B cell (primary cell): ENCODE measurements at regions of chr5 and their contacts with region 1.

Region 1: DNA sequence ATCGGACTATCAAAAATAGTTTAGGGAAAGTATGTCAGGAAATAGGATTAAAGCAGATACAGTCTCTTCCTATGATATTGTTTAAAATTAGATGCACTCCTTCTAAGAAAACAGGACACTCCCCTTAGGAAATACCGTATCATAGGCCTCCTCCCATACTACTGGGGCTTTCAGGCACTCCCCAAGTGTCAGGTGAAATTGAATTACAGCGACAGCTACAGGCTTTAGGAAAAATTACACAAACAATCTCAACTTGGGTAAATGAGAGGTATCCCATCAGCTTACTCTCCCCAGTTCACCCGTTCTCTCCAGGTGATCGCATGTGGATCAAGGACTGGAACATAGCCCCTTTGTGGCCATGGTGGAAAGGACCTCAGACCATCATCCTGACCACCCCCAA is 110.4 kb upstream of the EPB41L4A start:
- DNase-seq: peak; percentile 56
- ATAC-seq: no peak
- H3K4me3 ChIP-seq: no peak overlapping the region
- H3K4me3 Mint-ChIP-seq: no peak overlapping the region
- H3K27ac ChIP-seq: peak overlapping the region in 1 of 2 donors; percentile 61
- H3K27ac Mint-ChIP-seq: peak overlapping the region; percentile 85
- H3K4me1 ChIP-seq: peaks cover 81 to 83% of the 10 kb centered on the region in 2 donors
- H3K4me1 Mint-ChIP-seq: peaks cover 93% of the 10 kb centered on the region
- H3K27me3 ChIP-seq: no peaks in the 10 kb centered on the region
- H3K27me3 Mint-ChIP-seq: no peaks in the 10 kb centered on the region
- CTCF ChIP-seq: peak; percentile 66

Region 2: DNA sequence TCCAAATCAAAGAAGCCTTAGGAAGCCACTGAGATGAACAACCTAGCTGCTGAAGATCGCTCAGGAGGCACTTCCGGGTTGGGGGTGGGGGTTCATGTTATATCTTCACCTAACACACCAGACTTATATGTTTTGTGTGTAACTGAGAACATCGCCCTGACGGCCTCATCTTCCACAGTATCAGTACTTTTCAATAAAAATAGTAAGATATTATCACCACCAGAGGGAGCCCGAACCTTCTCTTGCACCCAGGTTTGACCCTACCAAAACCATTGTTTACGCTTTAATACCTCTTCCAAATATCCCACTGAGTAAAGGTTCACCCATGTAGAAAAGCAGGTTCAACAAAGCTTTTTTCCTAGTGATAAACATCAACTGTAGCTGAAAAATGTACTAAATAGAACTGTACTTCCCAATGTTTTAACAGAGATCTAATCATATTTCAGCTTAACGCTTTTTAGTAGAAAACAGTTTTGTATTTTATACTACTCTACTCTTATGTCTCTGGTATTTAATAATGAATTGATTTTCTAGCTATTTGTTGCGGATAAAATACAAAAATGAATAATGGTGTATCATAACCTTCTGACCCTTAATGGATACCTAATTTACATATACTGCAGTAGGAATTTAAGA is 354.4 kb before region 1 on chr5:
- CTCF ChIA-PET with region 1: interaction called, 32 read pairs
- POLR2A ChIA-PET with region 1: no interaction called
- intact Hi-C with region 1: loop called (anchors 1 kb)
- DNase-seq: peak; percentile 70
- ATAC-seq: peak; percentile 64
- H3K4me3 ChIP-seq: no peak overlapping the region
- H3K4me3 Mint-ChIP-seq: no peak overlapping the region
- H3K27ac ChIP-seq: no peak overlapping the region
- H3K27ac Mint-ChIP-seq: no peak overlapping the region
- H3K4me1 ChIP-seq: peaks cover 3% of the 10 kb centered on the region in 2 donors
- H3K4me1 Mint-ChIP-seq: peaks cover 4% of the 10 kb centered on the region
- H3K27me3 ChIP-seq: no peaks in the 10 kb centered on the region
- H3K27me3 Mint-ChIP-seq: no peaks in the 10 kb centered on the region
- CTCF ChIP-seq: peak; percentile 86

Region 3: GRCh38 chr5:112210430-112211005 is 319.0 kb before region 1 on chr5:
- CTCF ChIA-PET with region 1: interaction called, 9 read pairs
- POLR2A ChIA-PET with region 1: no interaction called
- intact Hi-C with region 1: loop called (anchors 1 kb)
- DNase-seq: peak; percentile 33
- ATAC-seq: no peak
- H3K4me3 ChIP-seq: no peak overlapping the region
- H3K4me3 Mint-ChIP-seq: no peak overlapping the region
- H3K27ac ChIP-seq: no peak overlapping the region
- H3K27ac Mint-ChIP-seq: no peak overlapping the region
- H3K4me1 ChIP-seq: no peaks in the 10 kb centered on the region
- H3K4me1 Mint-ChIP-seq: no peaks in the 10 kb centered on the region
- H3K27me3 ChIP-seq: no peaks in the 10 kb centered on the region
- H3K27me3 Mint-ChIP-seq: peaks cover 26% of the 10 kb centered on the region
- CTCF ChIP-seq: no peak

Region 4: DNA sequence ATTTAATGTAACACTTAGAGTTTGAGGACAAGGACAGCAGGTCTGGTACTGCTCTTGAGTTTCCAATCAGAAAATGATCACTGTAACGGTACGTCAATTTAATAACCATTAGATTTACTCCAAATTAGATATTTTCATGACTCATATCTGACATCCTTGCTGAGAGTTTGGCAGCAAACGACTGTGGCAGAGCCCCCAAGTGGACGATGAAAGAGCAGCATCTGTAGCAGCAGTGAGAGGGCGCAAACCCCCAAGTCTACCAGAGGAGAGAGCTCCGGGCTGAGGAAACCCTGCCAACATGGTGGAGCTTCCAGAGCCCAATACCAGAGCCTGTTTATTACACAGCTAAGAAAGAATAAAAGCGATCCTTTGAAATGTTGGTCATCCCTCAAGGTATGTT is 37.2 kb before region 1 on chr5:
- CTCF ChIA-PET with region 1: interaction called, 58 read pairs
- POLR2A ChIA-PET with region 1: no interaction called
- intact Hi-C with region 1: loop called (anchors 5 kb)
- DNase-seq: peak; percentile 64
- ATAC-seq: peak; percentile 91
- H3K4me3 ChIP-seq: no peak overlapping the region
- H3K4me3 Mint-ChIP-seq: no peak overlapping the region
- H3K27ac ChIP-seq: no peak overlapping the region
- H3K27ac Mint-ChIP-seq: no peak overlapping the region
- H3K4me1 ChIP-seq: peaks cover 4% of the 10 kb centered on the region in 2 donors
- H3K4me1 Mint-ChIP-seq: peaks cover 7% of the 10 kb centered on the region
- H3K27me3 ChIP-seq: no peaks in the 10 kb centered on the region
- H3K27me3 Mint-ChIP-seq: peaks cover 10% of the 10 kb centered on the region
- CTCF ChIP-seq: peak; percentile 63

Region 5: GRCh38 chr5:112551419-112552032 is 22.0 kb after region 1 on chr5:
- CTCF ChIA-PET with region 1: interaction called, 22 read pairs
- POLR2A ChIA-PET with region 1: no interaction called
- intact Hi-C with region 1: loop called (anchors 2 kb)
- DNase-seq: peak; percentile 71
- ATAC-seq: peak; percentile 72
- H3K4me3 ChIP-seq: no peak overlapping the region
- H3K4me3 Mint-ChIP-seq: no peak overlapping the region
- H3K27ac ChIP-seq: no peak overlapping the region
- H3K27ac Mint-ChIP-seq: no peak overlapping the region
- H3K4me1 ChIP-seq: peaks cover 15 to 18% of the 10 kb centered on the region in 2 donors
- H3K4me1 Mint-ChIP-seq: peaks cover 26% of the 10 kb centered on the region
- H3K27me3 ChIP-seq: no peaks in the 10 kb centered on the region
- H3K27me3 Mint-ChIP-seq: no peaks in the 10 kb centered on the region
- CTCF ChIP-seq: peak; percentile 87

Region 6: DNA sequence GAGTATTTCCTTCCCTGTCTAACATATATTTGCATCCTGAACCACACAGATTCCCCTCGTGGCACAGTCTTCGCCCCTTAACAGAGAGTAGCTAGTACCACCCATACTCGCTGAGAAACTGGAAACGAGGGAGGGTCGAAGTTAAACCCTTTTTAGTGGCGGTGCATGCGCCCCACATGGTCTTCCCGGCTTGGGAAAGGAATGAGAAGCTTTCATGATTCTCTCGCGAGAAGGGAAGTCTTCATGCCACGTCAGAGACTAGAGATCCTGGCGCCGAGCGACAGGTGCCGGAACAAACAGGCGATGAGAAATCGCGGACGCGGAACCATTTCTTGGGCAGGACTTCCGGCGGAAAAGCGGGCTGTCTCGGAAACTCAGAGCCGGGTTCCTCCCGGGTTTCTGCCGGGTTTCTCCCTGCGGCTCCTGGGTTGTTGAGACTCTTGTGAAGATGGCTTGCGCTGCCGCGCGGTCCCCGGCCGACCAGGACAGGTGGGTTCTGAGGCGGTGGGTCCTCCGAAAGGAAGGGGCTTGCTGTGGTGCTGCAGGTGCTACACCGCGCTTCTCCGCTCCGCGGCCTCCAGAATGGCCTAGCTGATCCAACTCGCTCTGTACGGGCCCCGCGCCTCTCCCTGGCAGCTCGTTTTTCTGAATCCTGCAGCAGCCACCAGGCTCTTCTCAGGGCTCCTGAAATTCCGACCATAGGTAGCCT is 331.6 kb after region 1 on chr5 and contains the start of gene SRP19:
- CTCF ChIA-PET with region 1: no interaction called
- POLR2A ChIA-PET with region 1: no interaction called
- intact Hi-C with region 1: loop called (anchors 5 kb)
- DNase-seq: peak; percentile 94
- ATAC-seq: peak; percentile 94
- H3K4me3 ChIP-seq: peak within 1 kb of the TSS; percentile 77 to 99 (median 95)
- H3K4me3 Mint-ChIP-seq: peak within 1 kb of the TSS; percentile 98
- H3K27ac ChIP-seq: peak within 1 kb of the TSS; percentile 83 to 92
- H3K27ac Mint-ChIP-seq: peak within 1 kb of the TSS; percentile 93
- H3K4me1 ChIP-seq: peaks cover 17 to 19% of the 10 kb centered on the region in 2 donors
- H3K4me1 Mint-ChIP-seq: peaks cover 30% of the 10 kb centered on the region
- H3K27me3 ChIP-seq: peaks cover 0 to 2% (median under 1%) of the 10 kb centered on the region in 4 experiments
- H3K27me3 Mint-ChIP-seq: peaks cover 17% of the 10 kb centered on the region
- CTCF ChIP-seq: no peak
- total RNA-seq, gene SRP19: 33.8 and 41.5 TPM in 2 replicates

Region 7: GRCh38 chr5:113513384-113514288 is 984.1 kb after region 1 on chr5 and contains the start of gene YTHDC2:
- CTCF ChIA-PET with region 1: no interaction called
- POLR2A ChIA-PET with region 1: no interaction called
- intact Hi-C with region 1: loop called (anchors 10 kb)
- DNase-seq: peak; percentile 93
- ATAC-seq: peak; percentile 97
- H3K4me3 ChIP-seq: peak within 1 kb of the TSS; percentile 59 to 93 (median 84)
- H3K4me3 Mint-ChIP-seq: peak within 1 kb of the TSS; percentile 99
- H3K27ac ChIP-seq: peak within 1 kb of the TSS; percentile 83 to 93
- H3K27ac Mint-ChIP-seq: peak within 1 kb of the TSS; percentile 95
- H3K4me1 ChIP-seq: peaks cover 7 to 17% of the 10 kb centered on the region in 2 donors
- H3K4me1 Mint-ChIP-seq: peaks cover 30% of the 10 kb centered on the region
- H3K27me3 ChIP-seq: peaks cover 0 to 8% (median 3%) of the 10 kb centered on the region in 4 experiments
- H3K27me3 Mint-ChIP-seq: peaks cover 18% of the 10 kb centered on the region
- CTCF ChIP-seq: peak; percentile 18
- total RNA-seq, gene YTHDC2: 52.6 and 62.4 TPM in 2 replicates